Activated T-helper 1 cell treated with anti-CD3 and anti-CD28 coated beads, Interleukin-12 subunit alpha, Interleukin-12 subunit beta, Interleukin-2, Interleukin-4 antibody, amounts not matched to agents 30 ng/mL and 10 ng/mL and 1 ng/mL, durations not matched to agents 14 hours and 24 hours and 36 hours (primary cell): ENCODE measurements at regions of chr9 and their contacts with region 1.

Region 1: GRCh38 chr9:5352637-5353455 is 13.2 kb upstream of the RLN1 start:
- DNase-seq: no peak
- H3K4me3 Mint-ChIP-seq: no peak overlapping the region
- H3K27ac Mint-ChIP-seq: no peak overlapping the region
- H3K4me1 Mint-ChIP-seq: peaks cover 29% of the 10 kb centered on the region
- H3K27me3 Mint-ChIP-seq: no peaks in the 10 kb centered on the region

Region 2: GRCh38 chr9:4902135-4902475 is 450.7 kb before region 1 on chr9:
- intact Hi-C with region 1: no loop called
- DNase-seq: no peak
- H3K4me3 Mint-ChIP-seq: no peak overlapping the region
- H3K27ac Mint-ChIP-seq: no peak overlapping the region
- H3K4me1 Mint-ChIP-seq: peaks cover 5% of the 10 kb centered on the region
- H3K27me3 Mint-ChIP-seq: no peaks in the 10 kb centered on the region

Region 3: DNA sequence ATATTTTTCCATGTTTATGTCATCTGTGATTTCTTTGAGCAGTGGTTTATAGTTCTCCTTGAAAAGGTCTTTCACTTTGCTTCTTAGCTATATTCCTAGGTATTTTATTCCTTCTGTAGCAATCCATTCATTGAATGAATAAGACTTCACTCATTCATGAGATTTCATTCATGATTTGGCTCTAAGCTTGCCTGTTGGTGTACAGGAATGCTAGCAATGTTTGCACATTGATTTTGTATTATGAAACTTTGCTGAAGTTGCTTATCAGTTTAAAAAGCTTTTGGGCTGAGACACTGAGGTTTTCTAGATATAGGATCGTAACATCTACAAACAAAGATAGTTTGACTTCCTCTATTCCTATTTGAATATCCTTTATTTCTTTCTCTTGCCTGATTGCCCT is 64.3 kb before region 1 on chr9:
- intact Hi-C with region 1: no loop called
- DNase-seq: no peak
- H3K4me3 Mint-ChIP-seq: no peak overlapping the region
- H3K27ac Mint-ChIP-seq: no peak overlapping the region
- H3K4me1 Mint-ChIP-seq: no peaks in the 10 kb centered on the region
- H3K27me3 Mint-ChIP-seq: peaks cover 3% of the 10 kb centered on the region

Region 4: GRCh38 chr9:5315187-5315923 is 37.5 kb before region 1 on chr9:
- intact Hi-C with region 1: loop called (anchors 5 kb)
- DNase-seq: no peak
- H3K4me3 Mint-ChIP-seq: no peak overlapping the region
- H3K27ac Mint-ChIP-seq: no peak overlapping the region
- H3K4me1 Mint-ChIP-seq: no peaks in the 10 kb centered on the region
- H3K27me3 Mint-ChIP-seq: peaks cover 4% of the 10 kb centered on the region

Region 5: DNA sequence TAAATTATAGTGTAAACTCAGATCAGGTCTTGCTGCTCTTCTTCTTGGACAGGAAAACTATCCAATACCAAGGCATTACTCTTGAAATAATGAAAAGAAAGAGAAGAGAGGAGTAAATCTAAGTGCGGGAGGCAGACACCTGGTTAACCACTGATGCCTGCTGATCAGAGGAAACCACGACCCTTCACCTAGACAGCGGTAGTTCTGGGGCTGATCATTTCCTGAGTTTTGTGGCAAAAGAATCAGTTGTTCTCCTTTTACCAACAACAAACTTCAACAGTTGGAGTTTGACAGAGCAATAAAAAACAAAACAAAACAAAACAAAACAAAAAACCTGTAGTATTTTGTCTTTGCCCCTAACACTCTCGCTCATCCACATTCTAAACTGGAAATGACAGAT is 16.2 kb before region 1 on chr9:
- intact Hi-C with region 1: loop called (anchors 1 kb)
- DNase-seq: peak; percentile 23
- H3K4me3 Mint-ChIP-seq: no peak overlapping the region
- H3K27ac Mint-ChIP-seq: no peak overlapping the region
- H3K4me1 Mint-ChIP-seq: peaks cover 36% of the 10 kb centered on the region
- H3K27me3 Mint-ChIP-seq: no peaks in the 10 kb centered on the region